ENCODE measurements at regions of chr17 and their contacts with region 1.

Region 1: GRCh38 chr17:65243802-65244220 is 106.6 kb downstream of the RGS9 start:
- DNase-seq: no peak
- H3K4me3 Mint-ChIP-seq: no peak overlapping the region
- H3K27ac Mint-ChIP-seq: no peak overlapping the region
- H3K4me1 Mint-ChIP-seq: peaks cover 7% of the 10 kb centered on the region
- H3K27me3 Mint-ChIP-seq: peaks cover 15% of the 10 kb centered on the region

Region 2: GRCh38 chr17:65231662-65232335 is 12.0 kb before region 1 on chr17:
- CTCF ChIA-PET with region 1: interaction called, 10 read pairs
- POLR2A ChIA-PET with region 1: no interaction called
- DNase-seq: peak; percentile 66
- H3K4me3 Mint-ChIP-seq: no peak overlapping the region
- H3K27ac Mint-ChIP-seq: no peak overlapping the region
- H3K4me1 Mint-ChIP-seq: peaks cover 25% of the 10 kb centered on the region
- H3K27me3 Mint-ChIP-seq: peaks cover 11% of the 10 kb centered on the region

Region 3: DNA sequence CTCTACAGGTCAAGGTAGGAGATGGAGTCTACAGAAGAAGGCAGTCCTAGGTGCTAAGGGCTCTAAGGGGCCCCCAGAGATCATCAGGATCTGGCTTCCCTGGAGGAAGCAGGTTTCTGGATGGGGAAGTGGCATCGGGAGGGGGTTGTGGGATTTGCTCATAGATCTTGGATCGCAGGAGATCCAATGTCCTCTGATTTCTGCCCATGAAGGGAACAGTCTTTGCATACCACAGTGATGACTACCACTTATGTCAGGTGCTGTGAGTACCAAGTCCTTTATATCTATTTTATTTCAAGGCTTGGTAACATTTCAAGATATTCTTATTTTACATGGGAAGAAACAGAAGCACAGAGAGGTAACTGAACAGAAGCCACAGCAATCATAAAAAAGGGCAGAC is 57.4 kb after region 1 on chr17:
- CTCF ChIA-PET with region 1: no interaction called
- POLR2A ChIA-PET with region 1: no interaction called
- DNase-seq: no peak
- H3K4me3 Mint-ChIP-seq: no peak overlapping the region
- H3K27ac Mint-ChIP-seq: no peak overlapping the region
- H3K4me1 Mint-ChIP-seq: no peaks in the 10 kb centered on the region
- H3K27me3 Mint-ChIP-seq: peaks cover 10% of the 10 kb centered on the region

Measured in activated CD4-positive, alpha-beta T cell treated with anti-CD3 and anti-CD28 coated beads, Interleukin-2, amount 10 ng/mL, durations not matched to agents 7 days and 5 days (primary cell).